AG04449 (cell line): ENCODE measurements at regions of chr5 and their contacts with region 1.

Region 1: GRCh38 chr5:160021831-160022446 is 13.0 kb downstream of the TTC1 start:
- DNase-seq: no peak
- H3K4me3 ChIP-seq: no peak overlapping the region
- CTCF ChIP-seq: peak; percentile 52

Region 2: GRCh38 chr5:159891371-159891770 is 130.6 kb before region 1 on chr5:
- CTCF ChIA-PET with region 1: no interaction called
- POLR2A ChIA-PET with region 1: no interaction called
- DNase-seq: no peak
- H3K4me3 ChIP-seq: no peak overlapping the region
- CTCF ChIP-seq: no peak

Region 3: DNA sequence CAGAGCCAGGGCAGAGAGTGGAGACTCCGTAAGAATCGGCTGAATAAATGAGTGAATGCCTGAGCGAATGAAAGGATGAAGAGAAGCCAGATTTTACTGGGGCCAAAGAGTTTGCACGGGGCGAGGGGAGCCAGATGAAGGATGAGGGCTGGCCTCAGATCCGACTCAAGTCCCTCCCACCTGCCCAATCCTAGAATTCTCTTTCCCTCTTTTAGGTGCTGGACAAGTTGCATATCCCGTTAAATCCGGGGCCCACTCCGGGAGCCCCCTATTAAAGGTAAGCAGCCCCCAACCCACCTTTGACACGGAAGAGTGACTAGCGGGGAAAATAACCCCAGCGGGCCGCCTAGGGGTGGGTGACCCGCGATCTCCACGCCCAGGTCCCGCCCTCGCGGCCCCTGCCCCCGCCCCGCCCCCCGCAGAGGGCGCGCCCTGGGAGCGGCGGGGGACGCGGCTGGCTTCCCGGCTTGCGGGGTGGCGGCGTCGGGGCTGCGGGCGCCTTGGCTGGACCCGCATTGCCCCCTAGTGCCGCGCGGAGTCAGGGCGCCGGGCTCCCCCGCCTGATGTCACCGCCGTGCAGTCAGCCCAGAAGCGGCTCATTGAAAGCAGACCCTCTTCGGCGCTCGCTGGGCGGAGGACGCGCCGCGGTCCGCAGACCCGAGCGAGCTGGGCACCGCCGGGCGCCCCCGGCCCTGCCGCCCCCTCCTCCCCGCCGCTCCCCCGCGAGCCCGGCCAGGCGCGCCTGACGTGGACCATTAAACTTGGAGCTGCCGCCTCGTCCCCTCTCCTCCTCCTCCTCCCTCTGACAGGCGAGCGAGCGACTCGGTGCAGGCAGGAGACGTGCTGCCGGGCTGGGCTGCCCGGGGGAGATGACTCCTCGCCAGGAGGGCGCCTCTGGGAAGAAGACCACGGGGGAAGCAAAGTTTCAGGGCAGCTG is 105.8 kb before region 1 on chr5 and contains the start of gene ADRA1B:
- CTCF ChIA-PET with region 1: no interaction called
- POLR2A ChIA-PET with region 1: no interaction called
- DNase-seq: no peak
- H3K4me3 ChIP-seq: peak within 1 kb of the TSS; percentile 54
- CTCF ChIP-seq: peak; percentile 89

Region 4: DNA sequence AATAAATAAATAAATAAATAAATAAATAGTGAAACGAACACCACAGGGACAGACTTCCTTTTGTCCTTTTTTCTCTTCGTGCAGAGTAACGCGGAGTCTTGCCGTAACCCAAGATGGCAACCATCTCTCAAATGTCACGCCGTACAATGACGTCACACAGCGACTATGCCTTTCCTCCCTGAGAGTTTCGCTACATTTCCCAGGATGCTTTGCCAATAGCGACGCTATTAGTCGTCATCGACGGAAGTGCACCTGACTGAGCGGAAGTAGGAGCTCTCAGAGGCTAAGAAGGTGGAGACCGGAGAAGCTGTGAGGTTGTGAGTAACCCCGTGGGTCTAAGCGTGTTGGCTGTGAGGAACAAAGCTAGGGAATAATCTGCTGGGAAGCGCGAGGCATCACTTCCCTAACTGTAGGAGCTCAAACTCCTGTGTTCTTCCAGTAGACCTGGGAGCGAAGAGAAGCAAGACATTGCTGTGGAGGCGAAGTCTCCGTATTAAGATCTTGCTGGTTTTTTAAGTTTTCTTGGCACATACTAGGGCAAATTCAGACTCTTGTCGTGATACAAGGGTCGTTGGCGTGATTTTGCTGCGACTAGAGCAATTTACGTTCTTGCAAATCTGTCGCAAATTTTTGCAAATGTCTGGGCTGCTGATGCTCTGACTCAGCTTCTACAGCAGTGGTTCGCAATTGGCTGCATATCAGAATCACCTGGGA is 12.9 kb before region 1 on chr5 and contains the start of gene TTC1:
- CTCF ChIA-PET with region 1: interaction called, 32 read pairs
- POLR2A ChIA-PET with region 1: no interaction called
- DNase-seq: peak; percentile 91
- H3K4me3 ChIP-seq: peak within 1 kb of the TSS; percentile 76
- CTCF ChIP-seq: no peak

Region 5: DNA sequence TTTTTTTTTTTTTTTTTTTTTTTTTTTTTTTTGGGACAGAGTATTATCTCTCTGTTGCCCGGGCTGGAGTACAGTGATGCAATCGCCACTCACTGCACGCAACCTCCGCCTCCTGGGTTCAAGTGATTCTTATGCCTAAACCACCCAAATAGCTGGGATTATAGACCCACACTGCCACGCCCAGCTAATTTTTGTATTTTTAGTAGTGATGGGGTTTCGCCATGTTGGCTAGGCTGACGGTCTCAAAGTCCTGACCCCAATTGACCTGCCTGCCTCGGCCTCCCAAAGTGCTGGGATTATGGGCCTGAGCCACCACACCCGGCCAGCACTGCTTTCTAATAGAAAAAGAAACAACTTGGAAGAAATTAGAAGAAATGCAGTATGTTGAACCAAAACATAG is 26.2 kb after region 1 on chr5:
- CTCF ChIA-PET with region 1: interaction called, 13 read pairs
- POLR2A ChIA-PET with region 1: no interaction called
- DNase-seq: no peak
- H3K4me3 ChIP-seq: no peak overlapping the region
- CTCF ChIP-seq: no peak

Region 6: DNA sequence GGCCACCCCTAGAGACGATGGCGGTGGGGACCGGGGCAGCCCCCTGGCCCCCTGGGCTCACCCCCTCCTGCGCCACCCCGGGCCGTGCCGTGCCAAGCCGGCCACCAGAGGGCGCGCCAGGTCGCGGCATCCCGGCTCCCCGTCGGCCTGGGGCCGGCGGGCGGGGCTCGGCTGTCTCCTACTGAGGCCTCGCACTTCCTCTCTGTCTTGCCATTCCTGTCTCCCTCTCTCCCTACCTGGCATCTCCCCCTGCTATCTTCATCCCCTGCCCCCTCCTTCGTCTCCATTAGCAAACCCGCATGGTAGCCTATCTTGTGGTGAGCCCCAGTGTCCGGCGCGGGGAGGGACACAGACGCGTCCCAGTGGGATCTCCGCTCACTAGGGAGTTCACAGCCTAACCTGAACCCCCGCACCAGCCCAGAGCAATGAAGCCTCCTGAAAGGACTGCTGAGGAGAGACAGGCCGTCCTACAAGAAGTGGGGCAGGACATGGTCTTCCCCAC is 177.5 kb after region 1 on chr5:
- CTCF ChIA-PET with region 1: interaction called, 13 read pairs
- POLR2A ChIA-PET with region 1: no interaction called
- DNase-seq: no peak
- H3K4me3 ChIP-seq: peak overlapping the region; percentile 50
- CTCF ChIP-seq: peak; percentile 82

Region 7: GRCh38 chr5:160363211-160363610 is 341.3 kb after region 1 on chr5:
- CTCF ChIA-PET with region 1: interaction called, 12 read pairs
- POLR2A ChIA-PET with region 1: no interaction called
- DNase-seq: no peak
- H3K4me3 ChIP-seq: no peak overlapping the region
- CTCF ChIP-seq: no peak

Region 8: GRCh38 chr5:160379511-160379910 is 357.6 kb after region 1 on chr5:
- CTCF ChIA-PET with region 1: interaction called, 19 read pairs
- POLR2A ChIA-PET with region 1: no interaction called
- DNase-seq: no peak
- H3K4me3 ChIP-seq: no peak overlapping the region
- CTCF ChIP-seq: no peak